Sigmoid colon (tissue), 7 donors: ENCODE measurements at regions of chr15 and their contacts with region 1.

Region 1: DNA sequence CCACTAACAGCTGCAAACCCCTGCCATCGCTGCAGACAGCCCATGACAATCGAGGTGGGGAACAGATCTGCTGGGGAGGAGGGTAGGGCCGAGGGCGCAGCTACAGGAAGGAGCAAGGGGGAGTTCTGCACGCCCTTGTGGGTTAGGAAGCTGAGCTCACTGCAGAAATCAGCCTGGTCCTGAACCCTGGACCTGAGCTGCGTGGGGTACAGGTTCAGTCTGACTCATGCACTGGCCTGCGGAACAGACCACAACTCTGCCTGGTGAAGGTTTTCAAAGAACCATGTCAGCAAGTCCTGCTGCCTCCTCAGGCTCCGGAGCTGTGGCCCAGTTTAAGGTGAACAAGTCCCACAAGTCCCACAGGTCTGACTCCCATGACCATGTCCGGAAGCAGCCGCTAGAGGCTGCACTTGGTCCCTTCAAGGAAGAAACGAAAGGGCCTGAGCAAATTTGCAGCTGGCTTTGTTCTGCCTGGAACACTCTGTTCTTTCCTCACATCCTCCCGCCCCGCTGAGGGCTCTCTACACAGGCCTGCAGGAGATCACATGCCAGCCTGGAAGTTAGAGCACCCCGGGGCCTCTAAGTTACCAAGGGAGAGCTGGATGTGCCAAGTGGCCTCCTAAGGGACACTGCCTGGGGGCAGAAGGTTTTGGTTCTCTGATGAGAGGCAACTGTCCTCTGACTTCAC is 49.4 kb upstream of the AKAP13 start:
- DNase-seq: peak; percentile 98
- H3K4me3 ChIP-seq: no peak overlapping the region
- H3K27ac ChIP-seq: peak overlapping the region; percentile 70 to 92 (median 88)
- H3K4me1 ChIP-seq: peaks cover 0 to 32% (median 22%) of the 10 kb centered on the region in 4 donors
- H3K27me3 ChIP-seq: no peaks in the 10 kb centered on the region
- CTCF ChIP-seq: peak; percentile 67 to 90 (median 80)
- EP300 ChIP-seq: peak; percentile 54 to 93 (median 84)
- POLR2A ChIP-seq: no peak

Region 2: GRCh38 chr15:85024509-85025214 is 306.4 kb before region 1 on chr15:
- intact Hi-C with region 1: no loop called
- DNase-seq: no peak
- H3K4me3 ChIP-seq: no peak overlapping the region
- H3K27ac ChIP-seq: no peak overlapping the region
- H3K4me1 ChIP-seq: peaks cover 0 to 37% (median 28%) of the 10 kb centered on the region in 4 donors
- H3K27me3 ChIP-seq: no peaks in the 10 kb centered on the region
- CTCF ChIP-seq: no peak
- EP300 ChIP-seq: no peak
- POLR2A ChIP-seq: no peak

Region 3: GRCh38 chr15:85380217-85380811 is 49.3 kb after region 1 on chr15 and contains the start of gene AKAP13:
- intact Hi-C with region 1: loop called (anchors 2 kb)
- DNase-seq: peak; percentile 99
- H3K4me3 ChIP-seq: peak within 1 kb of the TSS; percentile 65 to 97 (median 92)
- H3K27ac ChIP-seq: peak within 1 kb of the TSS; percentile 93 to 98 (median 97)
- H3K4me1 ChIP-seq: peaks cover 0 to 35% (median 22%) of the 10 kb centered on the region in 4 donors
- H3K27me3 ChIP-seq: no peaks in the 10 kb centered on the region
- CTCF ChIP-seq: no peak
- EP300 ChIP-seq: no peak
- POLR2A ChIP-seq: peak; percentile 91 to 92
- total RNA-seq, gene AKAP13: 98.5 to 142 (median 126) TPM

Region 4: GRCh38 chr15:85415783-85416182 is 84.7 kb after region 1 on chr15:
- intact Hi-C with region 1: loop called (anchors 2 kb)
- DNase-seq: no peak
- H3K4me3 ChIP-seq: no peak overlapping the region
- H3K27ac ChIP-seq: no peak overlapping the region
- H3K4me1 ChIP-seq: peaks cover 0 to 43% (median 25%) of the 10 kb centered on the region in 4 donors
- H3K27me3 ChIP-seq: no peaks in the 10 kb centered on the region
- CTCF ChIP-seq: no peak
- EP300 ChIP-seq: no peak
- POLR2A ChIP-seq: no peak

Region 5: DNA sequence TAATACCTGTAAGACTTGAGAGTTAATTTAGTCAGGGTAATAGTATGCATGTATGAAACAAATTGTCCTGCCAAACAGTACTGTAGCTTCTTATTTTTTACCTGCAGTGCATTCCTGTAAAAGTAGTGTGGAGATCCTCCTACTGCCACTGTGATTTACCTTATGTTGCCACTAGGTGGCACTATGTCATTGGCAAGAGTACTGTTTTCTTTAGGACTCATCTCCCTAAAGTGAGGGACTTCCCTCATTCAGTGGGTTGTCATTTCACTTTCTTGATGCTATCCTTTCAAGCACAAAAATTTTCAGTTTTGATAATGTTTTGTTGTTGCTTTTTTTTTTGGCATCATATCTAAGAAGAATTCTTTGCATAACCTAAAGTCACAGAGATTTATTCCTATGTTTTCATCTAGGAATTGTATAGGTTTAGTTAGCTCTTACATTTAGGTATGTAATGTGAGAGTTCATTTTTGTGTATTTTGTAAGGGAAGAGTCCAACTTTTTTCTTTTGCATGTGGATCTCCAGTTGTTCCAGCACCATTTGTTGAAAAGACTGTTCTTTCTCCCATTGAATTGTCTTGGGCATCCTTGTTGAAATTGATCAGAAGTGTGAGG is 155.0 kb after region 1 on chr15:
- intact Hi-C with region 1: loop called (anchors 5 kb)
- DNase-seq: no peak
- H3K4me3 ChIP-seq: no peak overlapping the region
- H3K27ac ChIP-seq: peak overlapping the region in 1 of 4 donors; percentile 62
- H3K4me1 ChIP-seq: peaks cover 0 to 63% (median 32%) of the 10 kb centered on the region in 4 donors
- H3K27me3 ChIP-seq: no peaks in the 10 kb centered on the region
- CTCF ChIP-seq: peak; percentile 44 to 63 (median 56)
- EP300 ChIP-seq: no peak
- POLR2A ChIP-seq: no peak

Region 6: DNA sequence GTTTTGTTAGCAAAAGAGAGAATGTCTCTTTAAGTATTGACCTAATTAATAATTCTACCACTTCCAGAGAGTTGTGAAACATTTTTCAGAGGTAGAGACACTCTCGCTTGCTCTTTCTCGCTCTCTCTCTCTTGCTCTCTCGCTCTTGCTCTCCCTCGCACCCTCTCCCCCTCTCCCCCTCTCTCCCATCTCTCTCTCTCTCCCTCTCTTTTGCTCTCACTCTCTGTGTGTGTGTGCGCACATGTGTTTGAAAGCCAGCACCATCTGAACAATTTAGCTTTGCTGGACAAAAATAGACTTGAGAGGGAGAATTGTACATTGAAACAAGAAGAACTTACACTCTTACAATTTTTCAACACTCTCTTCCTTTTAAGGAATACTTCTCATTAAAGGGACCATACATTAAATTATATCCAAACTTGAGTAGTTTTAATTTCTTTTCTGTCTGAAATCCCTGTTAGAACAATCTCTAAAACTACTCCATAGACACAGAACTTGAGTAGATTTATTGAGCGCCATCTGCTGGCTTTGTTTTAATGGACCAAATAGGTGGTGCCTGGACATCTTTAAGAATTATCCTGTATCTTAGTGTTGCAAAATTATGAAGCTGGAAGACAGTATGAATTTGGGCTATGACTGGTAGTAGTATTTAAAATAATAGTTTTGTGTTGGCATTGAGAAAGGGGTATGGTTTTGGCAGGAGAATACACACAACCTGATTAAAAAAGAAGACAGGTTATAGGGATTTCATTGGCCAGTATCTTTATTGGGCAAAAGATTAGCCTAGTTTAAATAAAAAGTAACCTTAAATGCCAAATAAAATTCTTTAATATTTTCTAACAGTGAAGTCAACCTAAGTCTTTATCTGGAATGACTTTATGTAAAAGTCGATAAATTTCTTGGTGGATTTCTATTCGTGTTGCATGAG is 174.0 kb after region 1 on chr15:
- intact Hi-C with region 1: loop called (anchors 1 kb)
- DNase-seq: no peak
- H3K4me3 ChIP-seq: no peak overlapping the region
- H3K27ac ChIP-seq: peak overlapping the region; percentile 10 to 68 (median 64)
- H3K4me1 ChIP-seq: peaks cover 0 to 14% (median 8%) of the 10 kb centered on the region in 4 donors
- H3K27me3 ChIP-seq: no peaks in the 10 kb centered on the region
- CTCF ChIP-seq: peak; percentile 35 to 56 (median 48)
- EP300 ChIP-seq: no peak
- POLR2A ChIP-seq: no peak

Region 7: DNA sequence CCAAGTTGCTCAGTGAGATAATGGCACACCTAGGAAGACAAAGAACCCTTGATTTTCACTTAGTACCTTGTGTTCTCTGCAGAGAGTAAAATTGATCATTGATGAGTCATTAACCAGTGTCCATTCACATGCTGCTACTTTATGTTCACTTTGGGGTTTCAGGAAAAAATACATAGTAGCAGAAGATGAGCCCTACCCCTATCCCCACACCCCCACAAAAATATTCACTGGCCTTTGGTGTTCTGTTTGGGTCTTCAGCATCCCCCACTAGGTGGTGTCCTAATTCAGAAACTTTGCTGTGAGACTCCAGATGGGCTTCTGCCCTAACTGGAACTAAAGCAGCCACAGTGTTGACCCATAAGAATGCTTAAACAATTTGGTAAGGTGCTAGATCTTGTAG is 284.9 kb after region 1 on chr15:
- intact Hi-C with region 1: loop called (anchors 2 kb)
- DNase-seq: no peak
- H3K4me3 ChIP-seq: no peak overlapping the region
- H3K27ac ChIP-seq: peak overlapping the region in 3 of 4 donors; percentile 81 to 89 (median 87)
- H3K4me1 ChIP-seq: peaks cover 0 to 71% (median 57%) of the 10 kb centered on the region in 4 donors
- H3K27me3 ChIP-seq: no peaks in the 10 kb centered on the region
- CTCF ChIP-seq: peak in 2 of 4 experiments; percentile 17 to 26
- EP300 ChIP-seq: no peak
- POLR2A ChIP-seq: no peak